ENCODE measurements at regions of chr1 and their contacts with region 1.

Region 1: GRCh38 chr1:101996825-101997465 is at the start of gene OLFM3:
- DNase-seq: no peak
- ATAC-seq: no peak
- H3K4me3 ChIP-seq: no peak within 1 kb of the TSS
- H3K27ac ChIP-seq: no peak within 1 kb of the TSS
- H3K4me1 ChIP-seq: no peaks in the 10 kb centered on the region
- H3K27me3 ChIP-seq: no peaks in the 10 kb centered on the region
- CTCF ChIP-seq: no peak
- POLR2A ChIP-seq: no peak
- RAD21 ChIP-seq: no peak
- total RNA-seq, gene OLFM3: not detected

Region 2: GRCh38 chr1:102420034-102420433 is 423.1 kb after region 1 on chr1:
- CTCF ChIA-PET with region 1: no interaction called
- POLR2A ChIA-PET with region 1: no interaction called
- RAD21 ChIA-PET with region 1: no interaction called
- intact Hi-C with region 1: loop called (anchors 10 kb)
- DNase-seq: no peak
- ATAC-seq: no peak
- H3K4me3 ChIP-seq: no peak overlapping the region
- H3K27ac ChIP-seq: no peak overlapping the region
- H3K4me1 ChIP-seq: no peaks in the 10 kb centered on the region
- H3K27me3 ChIP-seq: no peaks in the 10 kb centered on the region
- CTCF ChIP-seq: no peak
- POLR2A ChIP-seq: no peak
- RAD21 ChIP-seq: no peak